Activated CD4-positive, alpha-beta T cell treated with anti-CD3 and anti-CD28 coated beads, Interleukin-2, amount 10 ng/mL, durations not matched to agents 24 days and 14 days (primary cell): ENCODE measurements at regions of chr6 and their contacts with region 1.

Region 1: DNA sequence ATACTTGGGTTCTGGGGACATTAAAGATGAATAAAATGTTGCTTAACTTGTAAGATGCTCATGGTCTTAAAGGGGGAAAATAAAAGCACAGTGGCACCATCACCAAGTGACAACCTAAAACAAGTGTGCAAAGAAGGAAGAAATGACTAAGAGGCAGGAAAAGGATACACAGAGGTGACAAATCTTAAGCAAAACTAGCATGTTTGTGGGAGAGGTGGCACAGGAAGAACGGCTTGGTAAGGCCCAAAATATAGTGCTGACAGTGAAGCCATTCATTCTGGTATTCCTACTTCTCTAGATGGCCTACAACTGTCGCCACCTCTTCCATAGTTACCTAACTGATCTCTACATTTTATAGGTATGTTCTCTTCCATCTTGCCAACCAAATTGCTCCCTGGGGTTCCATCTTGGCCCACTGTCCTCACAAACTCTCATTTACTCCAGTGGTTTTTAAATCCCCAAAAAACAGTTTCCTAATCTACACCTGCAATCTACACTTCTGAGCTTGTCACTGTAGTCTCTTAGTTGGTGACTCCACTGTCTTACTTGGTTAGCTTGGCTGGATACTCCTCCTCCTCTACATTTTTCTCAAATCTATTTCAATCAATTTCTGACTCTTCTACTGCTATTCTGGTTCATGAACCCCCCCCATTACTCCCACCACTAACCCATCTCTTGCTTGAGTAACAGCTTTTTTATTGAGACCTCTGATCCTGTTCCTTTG is 33.5 kb downstream of the FAM8A1 start:
- DNase-seq: peak; percentile 72
- H3K4me3 Mint-ChIP-seq: peak overlapping the region; percentile 42
- H3K27ac Mint-ChIP-seq: peak overlapping the region; percentile 89
- H3K4me1 Mint-ChIP-seq: peaks cover 43% of the 10 kb centered on the region
- H3K27me3 Mint-ChIP-seq: no peaks in the 10 kb centered on the region

Region 2: GRCh38 chr6:17653198-17653882 is 19.7 kb after region 1 on chr6:
- intact Hi-C with region 1: loop called (anchors 2 kb)
- DNase-seq: no peak
- H3K4me3 Mint-ChIP-seq: no peak overlapping the region
- H3K27ac Mint-ChIP-seq: peak overlapping the region; percentile 88
- H3K4me1 Mint-ChIP-seq: peaks cover 31% of the 10 kb centered on the region
- H3K27me3 Mint-ChIP-seq: no peaks in the 10 kb centered on the region

Region 3: DNA sequence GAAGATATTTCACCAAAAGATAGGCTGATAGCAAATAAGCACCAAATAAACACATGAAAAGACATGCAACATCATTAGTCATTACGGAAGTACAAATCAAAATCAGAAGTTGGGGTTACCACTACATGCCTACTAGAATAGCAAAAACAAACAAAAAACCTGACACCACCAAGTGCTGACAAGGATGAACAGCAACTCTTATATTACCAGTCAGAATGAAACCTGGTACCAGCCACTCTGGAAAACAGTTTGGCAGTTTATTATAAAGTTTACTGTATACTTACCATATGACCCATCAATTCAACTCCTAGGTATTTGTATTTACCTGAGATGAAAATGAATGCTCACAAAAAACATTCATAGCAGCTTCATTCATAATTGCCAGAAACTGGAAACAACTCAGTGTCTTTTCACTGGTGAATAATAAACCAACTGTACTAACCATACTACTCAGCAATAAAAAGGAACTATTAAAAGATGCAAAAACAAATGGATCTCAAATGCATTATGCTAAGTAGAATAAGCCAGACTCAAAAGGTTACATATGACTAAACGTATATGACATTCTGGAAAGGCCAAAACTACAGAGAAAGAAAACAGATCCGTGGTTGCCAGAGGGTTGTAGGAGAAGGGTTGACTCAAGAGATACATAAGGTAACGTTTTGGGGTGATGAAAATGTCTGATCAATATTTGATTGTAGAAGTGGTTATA is 40.1 kb after region 1 on chr6:
- intact Hi-C with region 1: loop called (anchors 2 kb)
- DNase-seq: no peak
- H3K4me3 Mint-ChIP-seq: no peak overlapping the region
- H3K27ac Mint-ChIP-seq: peak overlapping the region; percentile 78
- H3K4me1 Mint-ChIP-seq: peaks cover 19% of the 10 kb centered on the region
- H3K27me3 Mint-ChIP-seq: no peaks in the 10 kb centered on the region

Region 4: DNA sequence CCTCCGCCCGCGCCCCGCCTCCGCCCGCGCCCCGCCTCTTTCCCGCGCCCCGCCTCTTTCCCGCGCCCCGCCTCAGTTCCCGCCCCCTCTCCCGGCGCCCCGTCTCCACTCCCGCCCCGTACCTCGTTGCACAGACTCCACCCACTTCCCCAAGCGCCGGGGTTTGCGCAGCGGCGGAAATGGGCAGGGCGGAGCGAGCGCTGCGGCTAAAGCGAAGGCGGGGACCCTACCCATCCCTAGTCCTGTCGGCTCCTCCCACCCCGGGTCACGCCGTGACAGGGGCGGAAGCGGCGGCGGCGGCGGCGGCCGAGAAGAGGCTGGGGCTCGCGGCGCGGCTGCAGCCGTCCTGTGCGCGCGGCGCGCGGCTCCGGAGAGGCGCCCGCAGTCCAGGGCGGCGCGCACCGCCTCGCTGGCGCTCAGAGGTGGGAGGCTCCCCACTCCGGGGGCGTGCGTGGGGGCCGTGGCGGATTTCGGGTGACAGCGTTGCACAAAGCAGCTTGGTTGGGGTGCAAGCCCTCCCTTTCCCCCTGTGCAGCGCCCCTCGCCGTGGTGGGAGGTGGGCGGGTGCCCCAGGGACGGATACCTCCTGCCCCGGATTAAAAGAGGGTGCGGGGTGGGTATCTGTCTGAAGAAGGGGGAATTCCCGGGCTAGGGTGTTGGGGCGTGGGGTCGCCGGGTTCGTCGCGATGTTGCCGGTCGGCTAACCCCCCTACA is 521.7 kb after region 1 on chr6 and contains the start of gene KDM1B:
- intact Hi-C with region 1: no loop called
- DNase-seq: peak; percentile 100
- H3K4me3 Mint-ChIP-seq: peak within 1 kb of the TSS; percentile 97
- H3K27ac Mint-ChIP-seq: peak within 1 kb of the TSS; percentile 92
- H3K4me1 Mint-ChIP-seq: peaks cover 20% of the 10 kb centered on the region
- H3K27me3 Mint-ChIP-seq: peaks cover 4% of the 10 kb centered on the region
- total RNA-seq, gene KDM1B: 8.5 and 8.6 TPM in 2 replicates

Region 5: GRCh38 chr6:18302561-18303439 is 669.2 kb after region 1 on chr6:
- intact Hi-C with region 1: no loop called
- DNase-seq: no peak
- H3K4me3 Mint-ChIP-seq: no peak overlapping the region
- H3K27ac Mint-ChIP-seq: no peak overlapping the region
- H3K4me1 Mint-ChIP-seq: no peaks in the 10 kb centered on the region
- H3K27me3 Mint-ChIP-seq: peaks cover 8% of the 10 kb centered on the region